ENCODE measurements at regions of chr14 and their contacts with region 1.

Region 1: GRCh38 chr14:91861091-91861490 is 6.2 kb downstream of the TC2N start:
- DNase-seq: no peak
- H3K4me3 ChIP-seq: no peak overlapping the region
- H3K27ac ChIP-seq: no peak overlapping the region
- H3K4me1 ChIP-seq: peaks cover 4% of the 10 kb centered on the region
- H3K27me3 ChIP-seq: no peaks in the 10 kb centered on the region
- CTCF ChIP-seq: no peak
- EP300 ChIP-seq: no peak
- POLR2A ChIP-seq: no peak

Region 2: GRCh38 chr14:91911474-91912032 is 50.5 kb after region 1 on chr14:
- intact Hi-C with region 1: loop called in 1 of 4 experiments (anchors 2 kb)
- DNase-seq: no peak
- H3K4me3 ChIP-seq: no peak overlapping the region
- H3K27ac ChIP-seq: no peak overlapping the region
- H3K4me1 ChIP-seq: no peaks in the 10 kb centered on the region
- H3K27me3 ChIP-seq: no peaks in the 10 kb centered on the region
- CTCF ChIP-seq: no peak
- EP300 ChIP-seq: no peak
- POLR2A ChIP-seq: no peak

Region 3: DNA sequence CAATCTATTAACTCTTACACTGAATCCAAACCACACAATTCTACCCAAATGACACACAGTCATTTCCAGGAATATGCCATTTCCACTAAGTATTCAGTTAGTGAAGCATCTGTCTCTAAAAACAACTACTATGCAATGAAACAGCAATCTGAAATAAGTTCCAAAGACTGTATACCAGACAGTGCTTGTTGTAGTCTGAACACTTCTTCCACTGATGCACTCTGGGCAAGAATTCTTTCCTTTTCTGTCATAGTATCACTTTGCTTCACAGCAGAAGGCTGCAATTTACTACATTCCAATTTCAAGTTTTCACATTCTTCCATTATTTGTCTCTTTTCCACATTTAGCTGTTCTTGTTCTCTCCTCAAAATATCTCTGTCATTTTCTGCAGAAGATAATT is 152.9 kb after region 1 on chr14:
- intact Hi-C with region 1: no loop called
- DNase-seq: no peak
- H3K4me3 ChIP-seq: no peak overlapping the region
- H3K27ac ChIP-seq: no peak overlapping the region
- H3K4me1 ChIP-seq: no peaks in the 10 kb centered on the region
- H3K27me3 ChIP-seq: no peaks in the 10 kb centered on the region
- CTCF ChIP-seq: no peak
- EP300 ChIP-seq: no peak
- POLR2A ChIP-seq: no peak

Measured in ovary (tissue), 10 donors.